ENCODE measurements at regions of chr9 and their contacts with region 1.

Region 1: GRCh38 chr9:93859431-93860215 is 95.5 kb downstream of the BARX1 start:
- DNase-seq: no peak
- ATAC-seq: no peak
- H3K4me3 ChIP-seq: no peak overlapping the region
- H3K27ac ChIP-seq: no peak overlapping the region
- H3K4me1 ChIP-seq: peaks cover 0 to 6% (median 0%) of the 10 kb centered on the region in 9 donors
- H3K27me3 ChIP-seq: peaks cover 0 to 73% (median 49%) of the 10 kb centered on the region in 7 donors
- CTCF ChIP-seq: no peak

Region 2: GRCh38 chr9:93761822-93762221 is 97.8 kb before region 1 on chr9:
- intact Hi-C with region 1: loop called in 1 of 10 experiments (anchors 10 kb)
- DNase-seq: no peak
- ATAC-seq: no peak
- H3K4me3 ChIP-seq: no peak overlapping the region
- H3K27ac ChIP-seq: no peak overlapping the region
- H3K4me1 ChIP-seq: no peaks in the 10 kb centered on the region
- H3K27me3 ChIP-seq: peaks cover 0 to 14% (median 3%) of the 10 kb centered on the region in 7 donors
- CTCF ChIP-seq: no peak